B cell (primary cell): ENCODE measurements at regions of chrX and their contacts with region 1.

Region 1: DNA sequence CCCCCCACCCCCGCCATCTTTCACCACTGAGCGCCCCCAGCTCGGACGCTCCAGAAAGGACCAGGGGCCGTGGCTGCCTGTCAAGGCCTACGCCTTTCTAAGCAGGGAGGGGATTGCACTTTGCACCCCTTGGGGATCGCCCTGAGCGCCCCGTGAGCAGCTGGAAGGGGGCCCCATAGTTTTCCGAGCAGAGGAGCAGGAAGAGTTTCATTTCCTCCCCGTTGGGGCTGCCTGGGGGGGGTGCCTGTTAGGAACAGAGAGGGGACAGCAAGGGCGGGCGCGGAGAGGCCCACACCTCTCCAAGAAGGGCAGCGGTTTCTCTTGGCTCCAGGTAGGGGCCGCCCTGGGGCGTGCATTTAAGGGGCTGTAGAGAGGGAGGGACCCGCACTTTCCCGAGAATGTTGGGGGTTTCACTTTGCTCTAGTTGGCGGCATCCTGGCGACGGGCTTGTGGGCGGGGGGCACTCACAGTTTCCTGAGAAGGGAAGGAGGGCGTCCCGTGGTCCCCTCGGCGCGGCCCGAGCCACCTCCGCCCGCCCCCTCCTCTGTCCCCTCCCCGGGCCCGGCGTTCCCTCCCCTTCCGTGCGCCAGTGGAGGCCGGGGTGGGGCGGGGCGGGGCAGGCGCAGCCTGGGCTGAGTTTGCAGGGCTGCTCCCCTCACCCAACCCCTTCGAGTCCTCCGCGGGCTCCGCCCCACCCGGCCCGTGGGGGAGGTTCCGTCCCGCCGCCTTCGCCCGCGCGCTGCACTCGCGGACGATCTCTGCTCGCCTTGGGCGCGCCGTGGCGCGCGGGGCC is 82.3 kb upstream of the CD99 start:
- DNase-seq: peak; percentile 90
- ATAC-seq: peak; percentile 97
- H3K4me3 ChIP-seq: peak overlapping the region; percentile 36 to 89 (median 83)
- H3K4me3 Mint-ChIP-seq: peak overlapping the region; percentile 94
- H3K27ac ChIP-seq: peak overlapping the region; percentile 43 to 58
- H3K27ac Mint-ChIP-seq: peak overlapping the region; percentile 89
- H3K4me1 ChIP-seq: peaks cover 16 to 25% of the 10 kb centered on the region in 2 donors
- H3K4me1 Mint-ChIP-seq: peaks cover 32% of the 10 kb centered on the region
- H3K27me3 ChIP-seq: no peaks in the 10 kb centered on the region
- H3K27me3 Mint-ChIP-seq: no peaks in the 10 kb centered on the region
- CTCF ChIP-seq: no peak

Region 2: DNA sequence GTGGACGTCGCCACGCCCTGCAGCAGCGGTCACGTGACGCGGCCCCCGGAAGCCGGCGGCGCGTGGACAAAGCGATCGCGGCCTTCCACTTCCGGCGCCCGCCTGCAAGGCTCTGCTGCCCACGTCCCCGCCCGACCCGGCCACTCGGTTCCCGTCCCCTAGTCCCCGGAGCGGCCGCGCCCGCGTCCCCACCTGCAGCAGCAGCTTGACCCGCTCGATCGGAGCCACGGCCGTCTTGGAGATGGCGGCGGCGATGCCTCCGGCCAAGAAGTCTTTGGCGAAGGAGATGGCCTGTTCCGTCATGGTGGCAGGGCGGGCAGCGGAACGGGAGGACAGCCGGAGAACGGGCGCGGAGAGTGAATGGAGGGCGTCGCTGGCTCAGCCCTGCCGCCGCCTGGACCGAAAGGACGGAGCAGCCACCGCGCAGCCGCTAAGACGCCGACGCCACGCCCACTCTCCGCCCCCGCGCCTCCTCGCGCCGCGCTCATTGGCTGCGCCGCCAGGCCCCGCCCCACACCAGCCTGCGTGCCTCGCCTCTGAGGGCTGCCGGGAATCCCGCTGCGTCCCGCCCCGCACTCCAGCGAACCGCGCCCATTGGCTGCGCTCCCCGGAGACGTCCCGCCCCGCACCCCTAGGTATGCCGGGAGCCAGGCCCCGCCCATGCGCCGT is 1217.0 kb before region 1 on chrX and contains the start of gene SLC25A6:
- CTCF ChIA-PET with region 1: no interaction called
- POLR2A ChIA-PET with region 1: no interaction called
- intact Hi-C with region 1: loop called (anchors 1 kb)
- DNase-seq: peak; percentile 99
- ATAC-seq: peak; percentile 95
- H3K4me3 ChIP-seq: peak within 1 kb of the TSS; percentile 60 to 100 (median 99)
- H3K4me3 Mint-ChIP-seq: peak within 1 kb of the TSS; percentile 92
- H3K27ac ChIP-seq: peak within 1 kb of the TSS; percentile 96 to 98
- H3K27ac Mint-ChIP-seq: peak within 1 kb of the TSS; percentile 96
- H3K4me1 ChIP-seq: peaks cover 17 to 22% of the 10 kb centered on the region in 2 donors
- H3K4me1 Mint-ChIP-seq: peaks cover 38% of the 10 kb centered on the region
- H3K27me3 ChIP-seq: no peaks in the 10 kb centered on the region
- H3K27me3 Mint-ChIP-seq: no peaks in the 10 kb centered on the region
- CTCF ChIP-seq: no peak
- total RNA-seq, gene SLC25A6: 323 and 343 TPM in 2 replicates

Region 3: GRCh38 chrX:1657367-1658070 is 951.3 kb before region 1 on chrX:
- CTCF ChIA-PET with region 1: no interaction called
- POLR2A ChIA-PET with region 1: no interaction called
- intact Hi-C with region 1: loop called (anchors 1 kb)
- DNase-seq: peak; percentile 76
- ATAC-seq: peak; percentile 19
- H3K4me3 ChIP-seq: peak overlapping the region in 4 of 5 experiments; percentile 21 to 52 (median 33)
- H3K4me3 Mint-ChIP-seq: peak overlapping the region; percentile 85
- H3K27ac ChIP-seq: peak overlapping the region; percentile 75
- H3K27ac Mint-ChIP-seq: peak overlapping the region; percentile 84
- H3K4me1 ChIP-seq: peaks cover 11 to 32% of the 10 kb centered on the region in 2 donors
- H3K4me1 Mint-ChIP-seq: peaks cover 36% of the 10 kb centered on the region
- H3K27me3 ChIP-seq: no peaks in the 10 kb centered on the region
- H3K27me3 Mint-ChIP-seq: no peaks in the 10 kb centered on the region
- CTCF ChIP-seq: no peak

Region 4: DNA sequence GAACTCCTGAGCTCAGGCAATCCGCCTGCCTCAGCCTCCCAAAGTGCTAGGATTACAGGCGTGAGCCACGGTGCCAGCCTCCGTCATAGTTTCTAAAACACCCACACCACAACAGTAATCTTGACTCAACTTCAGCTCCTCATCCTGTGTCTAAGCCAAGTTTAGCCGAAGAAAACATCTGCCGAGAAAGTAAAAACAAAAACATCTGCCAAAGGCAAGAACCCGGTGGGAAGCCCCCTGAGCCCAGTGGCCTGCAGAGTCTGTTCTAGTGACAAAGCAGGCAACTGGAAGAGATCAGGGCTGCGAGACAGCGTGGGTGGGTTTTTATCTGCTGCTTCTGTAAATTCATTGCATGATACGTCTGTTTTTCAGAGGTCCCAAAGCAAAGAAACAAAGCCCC is 55.7 kb after region 1 on chrX:
- CTCF ChIA-PET with region 1: no interaction called
- POLR2A ChIA-PET with region 1: no interaction called
- intact Hi-C with region 1: no loop called
- DNase-seq: no peak
- ATAC-seq: no peak
- H3K4me3 ChIP-seq: no peak overlapping the region
- H3K4me3 Mint-ChIP-seq: no peak overlapping the region
- H3K27ac ChIP-seq: no peak overlapping the region
- H3K27ac Mint-ChIP-seq: no peak overlapping the region
- H3K4me1 ChIP-seq: peaks cover 0 to 4% of the 10 kb centered on the region in 2 donors
- H3K4me1 Mint-ChIP-seq: peaks cover 9% of the 10 kb centered on the region
- H3K27me3 ChIP-seq: no peaks in the 10 kb centered on the region
- H3K27me3 Mint-ChIP-seq: no peaks in the 10 kb centered on the region
- CTCF ChIP-seq: no peak